ENCODE measurements at regions of chr4 and their contacts with region 1.

Region 1: DNA sequence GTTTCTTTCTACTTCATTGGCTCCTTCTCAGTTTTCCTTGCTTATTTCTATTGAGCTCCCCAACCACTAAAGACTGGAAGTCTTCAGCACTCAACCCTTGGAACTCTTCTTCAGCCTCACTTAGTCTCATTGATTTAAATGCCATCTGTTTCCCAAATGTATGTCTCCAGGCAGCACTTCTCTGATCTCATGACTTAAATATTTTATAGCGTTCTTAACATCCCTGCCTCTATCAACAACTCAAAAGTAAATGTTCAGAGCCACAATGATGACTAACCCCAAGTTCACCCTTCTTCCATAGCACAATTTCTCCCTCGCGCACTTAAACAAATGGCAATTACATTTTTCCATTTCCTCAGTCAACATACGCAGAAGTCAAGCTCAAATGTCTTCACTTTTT is 1393.3 kb downstream of the ARAP2 start:
- DNase-seq: no peak
- ATAC-seq: no peak
- H3K4me3 ChIP-seq: no peak overlapping the region
- H3K27ac ChIP-seq: no peak overlapping the region
- H3K4me1 ChIP-seq: no peaks in the 10 kb centered on the region
- H3K27me3 ChIP-seq: no peaks in the 10 kb centered on the region
- CTCF ChIP-seq: no peak
- POLR2A ChIP-seq: no peak
- RAD21 ChIP-seq: no peak

Region 2: GRCh38 chr4:35300996-35301774 is 450.2 kb after region 1 on chr4:
- CTCF ChIA-PET with region 1: no interaction called
- POLR2A ChIA-PET with region 1: no interaction called
- RAD21 ChIA-PET with region 1: no interaction called
- intact Hi-C with region 1: loop called (anchors 10 kb)
- DNase-seq: no peak
- ATAC-seq: no peak
- H3K4me3 ChIP-seq: no peak overlapping the region
- H3K27ac ChIP-seq: no peak overlapping the region
- H3K4me1 ChIP-seq: no peaks in the 10 kb centered on the region
- H3K27me3 ChIP-seq: no peaks in the 10 kb centered on the region
- CTCF ChIP-seq: no peak
- POLR2A ChIP-seq: no peak
- RAD21 ChIP-seq: no peak

Measured in HCT116 (cell line).